CD8-positive, alpha-beta T cell (primary cell): ENCODE measurements at regions of chr7 and their contacts with region 1.

Region 1: GRCh38 chr7:34991938-34992840 is 45.1 kb downstream of the DPY19L1 start:
- DNase-seq: peak in 7 of 9 experiments; percentile 4 to 69 (median 35)
- ATAC-seq: peak; percentile 92
- H3K4me3 ChIP-seq: peak overlapping the region in 1 of 2 experiments; percentile 26
- H3K4me3 Mint-ChIP-seq: peak overlapping the region; percentile 67
- H3K27ac ChIP-seq: peak overlapping the region in 1 of 2 experiments; percentile 59
- H3K27ac Mint-ChIP-seq: peak overlapping the region; percentile 89
- H3K4me1 ChIP-seq: no peaks in the 10 kb centered on the region
- H3K4me1 Mint-ChIP-seq: peaks cover 8% of the 10 kb centered on the region
- H3K27me3 ChIP-seq: no peaks in the 10 kb centered on the region
- H3K27me3 Mint-ChIP-seq: no peaks in the 10 kb centered on the region
- CTCF ChIP-seq: no peak

Region 2: GRCh38 chr7:35012160-35012559 is 20.0 kb after region 1 on chr7:
- CTCF ChIA-PET with region 1: no interaction called
- POLR2A ChIA-PET with region 1: no interaction called
- intact Hi-C with region 1: loop called in 1 of 2 experiments (anchors 1 kb)
- DNase-seq: no peak
- ATAC-seq: no peak
- H3K4me3 ChIP-seq: no peak overlapping the region
- H3K4me3 Mint-ChIP-seq: no peak overlapping the region
- H3K27ac ChIP-seq: no peak overlapping the region
- H3K27ac Mint-ChIP-seq: no peak overlapping the region
- H3K4me1 ChIP-seq: no peaks in the 10 kb centered on the region
- H3K4me1 Mint-ChIP-seq: no peaks in the 10 kb centered on the region
- H3K27me3 ChIP-seq: no peaks in the 10 kb centered on the region
- H3K27me3 Mint-ChIP-seq: no peaks in the 10 kb centered on the region
- CTCF ChIP-seq: no peak

Region 3: GRCh38 chr7:35185907-35186731 is 193.9 kb after region 1 on chr7:
- CTCF ChIA-PET with region 1: no interaction called
- POLR2A ChIA-PET with region 1: no interaction called
- intact Hi-C with region 1: no loop called
- DNase-seq: peak in 1 of 9 experiments; percentile 5
- ATAC-seq: no peak
- H3K4me3 ChIP-seq: no peak overlapping the region
- H3K4me3 Mint-ChIP-seq: peak overlapping the region; percentile 56
- H3K27ac ChIP-seq: no peak overlapping the region
- H3K27ac Mint-ChIP-seq: no peak overlapping the region
- H3K4me1 ChIP-seq: no peaks in the 10 kb centered on the region
- H3K4me1 Mint-ChIP-seq: peaks cover 8% of the 10 kb centered on the region
- H3K27me3 ChIP-seq: no peaks in the 10 kb centered on the region
- H3K27me3 Mint-ChIP-seq: peaks cover 15% of the 10 kb centered on the region
- CTCF ChIP-seq: no peak